OCI-LY7 (cell line): ENCODE measurements at regions of chr1 and their contacts with region 1.

Region 1: GRCh38 chr1:192609110-192610079 is 26.6 kb upstream of the RGS13 start:
- DNase-seq: peak; percentile 93
- H3K4me3 ChIP-seq: peak overlapping the region; percentile 35
- H3K27ac ChIP-seq: peak overlapping the region; percentile 76
- H3K4me1 ChIP-seq: peaks cover 70% of the 10 kb centered on the region
- CTCF ChIP-seq: peak; percentile 37; the same call in 1 of the 2 replicates

Region 2: GRCh38 chr1:192477630-192478029 is 131.8 kb before region 1 on chr1:
- CTCF ChIA-PET with region 1: interaction called, 4 read pairs
- POLR2A ChIA-PET with region 1: interaction called, 7 read pairs
- intact Hi-C with region 1: loop called (anchors 1 kb)
- DNase-seq: peak; percentile 58
- H3K4me3 ChIP-seq: no peak overlapping the region
- H3K27ac ChIP-seq: no peak overlapping the region
- H3K4me1 ChIP-seq: no peaks in the 10 kb centered on the region
- CTCF ChIP-seq: peak; percentile 90

Region 3: GRCh38 chr1:192516776-192517297 is 92.6 kb before region 1 on chr1:
- CTCF ChIA-PET with region 1: interaction called, 3 read pairs
- POLR2A ChIA-PET with region 1: interaction called, 9 read pairs
- intact Hi-C with region 1: loop called (anchors 2 kb)
- DNase-seq: peak; percentile 89
- H3K4me3 ChIP-seq: peak overlapping the region; percentile 58
- H3K27ac ChIP-seq: peak overlapping the region; percentile 46
- H3K4me1 ChIP-seq: peaks cover 39% of the 10 kb centered on the region
- CTCF ChIP-seq: no peak

Region 4: GRCh38 chr1:192580351-192580962 is 28.9 kb before region 1 on chr1:
- CTCF ChIA-PET with region 1: interaction called, 3 read pairs
- POLR2A ChIA-PET with region 1: interaction called, 9 read pairs
- intact Hi-C with region 1: loop called (anchors 2 kb)
- DNase-seq: peak; percentile 48
- H3K4me3 ChIP-seq: no peak overlapping the region
- H3K27ac ChIP-seq: no peak overlapping the region
- H3K4me1 ChIP-seq: peaks cover 4% of the 10 kb centered on the region
- CTCF ChIP-seq: peak; percentile 80

Region 5: DNA sequence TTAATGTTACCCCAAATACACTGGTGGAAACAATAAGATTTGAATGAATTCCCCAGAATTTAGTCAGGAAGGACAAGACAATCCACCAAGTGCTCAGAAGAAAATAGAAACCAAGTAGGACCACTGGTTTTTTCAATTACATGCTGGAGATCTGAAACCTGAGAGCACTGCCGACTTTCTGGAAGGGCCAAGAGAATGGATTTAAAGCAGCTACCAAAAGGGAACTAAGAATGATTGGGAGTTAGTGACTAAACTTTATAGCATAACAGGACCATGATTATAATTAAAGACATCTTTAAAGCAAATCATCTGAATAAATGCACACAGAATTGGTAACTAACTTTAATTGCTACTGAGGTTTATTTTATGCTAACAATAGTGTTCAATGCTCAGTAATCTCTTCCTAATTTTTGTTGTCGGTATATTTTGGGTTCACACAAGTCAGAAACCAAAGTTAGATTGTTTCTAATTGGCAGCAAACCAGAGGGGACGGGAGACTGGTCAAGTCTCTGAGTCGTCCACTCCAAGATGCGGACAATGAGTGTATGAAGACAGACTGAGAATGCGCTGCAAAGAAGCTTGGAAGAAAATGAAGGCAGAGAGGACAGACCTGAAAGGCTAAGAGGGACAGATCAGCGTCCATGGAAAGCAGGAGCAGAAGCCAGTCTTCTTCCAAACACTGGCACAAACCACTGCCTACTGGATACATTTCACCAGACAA is 24.3 kb after region 1 on chr1:
- CTCF ChIA-PET with region 1: interaction called, 3 read pairs
- POLR2A ChIA-PET with region 1: interaction called, 90 read pairs
- intact Hi-C with region 1: loop called (anchors 2 kb)
- DNase-seq: no peak
- H3K4me3 ChIP-seq: peak overlapping the region; percentile 80
- H3K27ac ChIP-seq: peak overlapping the region; percentile 100
- H3K4me1 ChIP-seq: peaks cover 66% of the 10 kb centered on the region
- CTCF ChIP-seq: no peak